BJ (cell line): ENCODE measurements at regions of chr15 and their contacts with region 1.

Region 1: GRCh38 chr15:61084944-61085367 is 144.1 kb downstream of the RORA start:
- DNase-seq: no peak
- H3K4me3 ChIP-seq: no peak overlapping the region
- H3K27me3 ChIP-seq: no peaks in the 10 kb centered on the region
- CTCF ChIP-seq: no peak

Region 2: GRCh38 chr15:60660290-60661051 is 424.5 kb before region 1 on chr15:
- CTCF ChIA-PET with region 1: no interaction called
- POLR2A ChIA-PET with region 1: no interaction called
- DNase-seq: peak; percentile 46
- H3K4me3 ChIP-seq: no peak overlapping the region
- H3K27me3 ChIP-seq: no peaks in the 10 kb centered on the region
- CTCF ChIP-seq: no peak

Region 3: GRCh38 chr15:61130945-61131942 is 46.3 kb after region 1 on chr15:
- CTCF ChIA-PET with region 1: no interaction called
- POLR2A ChIA-PET with region 1: interaction called, 16 read pairs
- DNase-seq: no peak
- H3K4me3 ChIP-seq: no peak overlapping the region
- H3K27me3 ChIP-seq: no peaks in the 10 kb centered on the region
- CTCF ChIP-seq: no peak

Region 4: DNA sequence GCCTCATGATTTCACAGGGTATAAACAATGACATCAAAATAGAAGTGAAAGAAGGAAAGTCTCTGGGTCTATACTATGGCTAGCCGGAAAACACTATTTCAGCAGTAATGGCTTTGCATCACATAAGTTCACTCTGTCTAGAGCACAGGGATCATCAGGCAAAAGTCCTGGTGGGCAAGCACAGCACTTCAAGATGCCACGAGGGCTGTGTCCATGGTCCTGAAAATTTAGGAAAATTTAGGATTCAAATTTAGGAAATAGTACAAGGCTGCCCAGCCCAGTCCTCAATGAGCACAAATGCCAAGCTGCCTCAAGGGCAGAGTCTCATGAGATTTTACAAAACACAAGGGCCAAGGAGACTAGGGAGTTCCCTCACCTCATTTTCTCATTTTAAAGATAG is 90.1 kb after region 1 on chr15:
- CTCF ChIA-PET with region 1: no interaction called
- POLR2A ChIA-PET with region 1: no interaction called
- DNase-seq: no peak
- H3K4me3 ChIP-seq: no peak overlapping the region
- H3K27me3 ChIP-seq: no peaks in the 10 kb centered on the region
- CTCF ChIP-seq: no peak